ENCODE measurements at regions of chr7 and their contacts with region 1.

Region 1: GRCh38 chr7:1459522-1459892 is 237 bp upstream of the MICALL2 start:
- DNase-seq: peak; percentile 99
- H3K4me3 Mint-ChIP-seq: peak overlapping the region; percentile 72
- H3K27ac Mint-ChIP-seq: no peak overlapping the region
- H3K4me1 Mint-ChIP-seq: peaks cover 9% of the 10 kb centered on the region
- H3K27me3 Mint-ChIP-seq: no peaks in the 10 kb centered on the region

Region 2: GRCh38 chr7:1247527-1248059 is 211.9 kb before region 1 on chr7:
- CTCF ChIA-PET with region 1: no interaction called
- POLR2A ChIA-PET with region 1: no interaction called
- intact Hi-C with region 1: no loop called
- DNase-seq: no peak
- H3K4me3 Mint-ChIP-seq: no peak overlapping the region
- H3K27ac Mint-ChIP-seq: no peak overlapping the region
- H3K4me1 Mint-ChIP-seq: peaks cover 8% of the 10 kb centered on the region
- H3K27me3 Mint-ChIP-seq: peaks cover 65% of the 10 kb centered on the region

Region 3: DNA sequence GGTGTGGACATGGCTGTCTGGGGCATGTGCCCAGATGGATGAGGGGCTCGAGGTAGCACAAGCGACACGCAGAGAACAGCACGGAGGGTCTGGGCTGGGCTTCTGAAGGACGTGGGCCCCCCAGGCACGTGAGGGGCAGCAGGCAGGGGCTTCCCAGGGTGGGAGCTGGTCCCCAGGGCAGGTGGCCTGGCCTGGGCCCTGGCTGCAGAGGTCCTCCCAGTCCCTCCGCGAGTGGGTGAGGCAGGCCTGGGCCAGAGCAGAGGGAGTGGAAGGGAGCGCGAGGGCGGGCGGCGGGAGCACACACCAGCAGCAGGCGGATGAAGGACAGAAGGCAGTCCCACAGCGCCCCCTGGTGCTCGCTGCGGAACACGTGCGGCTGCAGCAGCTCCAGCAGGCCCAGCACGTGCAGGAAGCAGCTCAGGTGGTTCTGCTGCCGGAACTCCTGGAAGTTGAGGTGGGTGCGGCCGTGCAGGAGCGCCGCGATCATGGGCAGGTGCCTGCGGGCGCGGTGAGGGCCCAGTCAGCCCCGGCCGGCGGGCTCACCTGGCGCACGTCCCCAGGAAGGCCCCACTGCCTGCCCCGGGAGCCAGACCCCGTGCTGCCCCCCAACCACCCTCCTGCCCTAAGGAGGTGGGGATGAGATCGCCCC is 14.5 kb after region 1 on chr7:
- CTCF ChIA-PET with region 1: interaction called, 12 read pairs
- POLR2A ChIA-PET with region 1: no interaction called
- intact Hi-C with region 1: no loop called
- DNase-seq: peak; percentile 91
- H3K4me3 Mint-ChIP-seq: no peak overlapping the region
- H3K27ac Mint-ChIP-seq: no peak overlapping the region
- H3K4me1 Mint-ChIP-seq: peaks cover 3% of the 10 kb centered on the region
- H3K27me3 Mint-ChIP-seq: no peaks in the 10 kb centered on the region

Region 4: DNA sequence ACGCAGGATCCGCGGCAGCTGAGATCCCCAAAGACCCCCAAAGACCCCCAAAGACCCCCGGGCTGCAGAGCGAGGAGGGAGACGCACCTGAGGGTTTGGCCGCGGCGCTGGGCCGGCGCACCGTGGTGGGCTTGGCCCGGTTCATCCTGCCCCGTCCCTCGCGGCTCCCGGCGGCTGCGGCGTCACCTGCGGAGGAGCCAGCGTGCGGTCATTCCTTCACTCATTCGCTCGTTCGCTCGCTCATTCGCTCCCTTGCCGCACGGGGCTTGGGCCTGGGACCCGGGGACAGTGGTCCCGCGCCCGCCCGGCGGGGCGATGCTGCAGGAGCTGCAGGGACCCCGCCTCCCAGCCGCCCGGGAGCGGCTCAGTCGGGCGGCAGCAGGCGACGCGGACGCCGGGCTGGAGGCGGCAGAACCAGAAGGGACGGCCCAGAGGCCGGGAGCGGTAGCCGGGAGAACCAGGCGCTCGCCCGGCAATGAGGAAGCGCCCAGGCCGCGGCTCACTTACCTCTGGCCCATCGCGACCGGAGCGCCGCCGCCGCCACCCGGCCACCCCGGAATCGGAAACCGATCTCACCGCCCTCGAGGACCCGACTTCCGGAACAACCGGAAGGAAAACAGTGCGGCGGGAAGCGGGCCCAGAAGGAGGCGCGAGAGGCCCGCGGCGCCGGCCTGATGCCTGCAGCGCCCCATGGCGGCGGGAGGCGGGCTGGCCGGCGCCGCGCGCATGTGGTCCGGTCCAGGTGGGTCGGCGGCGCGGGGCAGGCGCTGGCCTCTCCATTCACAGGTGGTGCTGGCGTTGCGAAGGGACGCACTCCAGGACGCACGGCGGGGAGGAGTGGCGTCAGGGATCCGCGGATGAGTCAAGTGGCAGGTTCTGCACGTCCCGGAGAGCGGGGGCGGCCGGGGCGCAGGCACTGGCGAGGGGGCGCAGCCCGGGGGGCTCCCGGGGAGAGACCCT is 44.6 kb after region 1 on chr7 and contains the start of gene INTS1:
- CTCF ChIA-PET with region 1: no interaction called
- POLR2A ChIA-PET with region 1: no interaction called
- intact Hi-C with region 1: loop called (anchors 5 kb)
- DNase-seq: peak; percentile 93
- H3K4me3 Mint-ChIP-seq: peak within 1 kb of the TSS; percentile 91
- H3K27ac Mint-ChIP-seq: peak within 1 kb of the TSS; percentile 80
- H3K4me1 Mint-ChIP-seq: peaks cover 30% of the 10 kb centered on the region
- H3K27me3 Mint-ChIP-seq: no peaks in the 10 kb centered on the region
- total RNA-seq, gene INTS1: 86.4 to 92.5 TPM

Region 5: DNA sequence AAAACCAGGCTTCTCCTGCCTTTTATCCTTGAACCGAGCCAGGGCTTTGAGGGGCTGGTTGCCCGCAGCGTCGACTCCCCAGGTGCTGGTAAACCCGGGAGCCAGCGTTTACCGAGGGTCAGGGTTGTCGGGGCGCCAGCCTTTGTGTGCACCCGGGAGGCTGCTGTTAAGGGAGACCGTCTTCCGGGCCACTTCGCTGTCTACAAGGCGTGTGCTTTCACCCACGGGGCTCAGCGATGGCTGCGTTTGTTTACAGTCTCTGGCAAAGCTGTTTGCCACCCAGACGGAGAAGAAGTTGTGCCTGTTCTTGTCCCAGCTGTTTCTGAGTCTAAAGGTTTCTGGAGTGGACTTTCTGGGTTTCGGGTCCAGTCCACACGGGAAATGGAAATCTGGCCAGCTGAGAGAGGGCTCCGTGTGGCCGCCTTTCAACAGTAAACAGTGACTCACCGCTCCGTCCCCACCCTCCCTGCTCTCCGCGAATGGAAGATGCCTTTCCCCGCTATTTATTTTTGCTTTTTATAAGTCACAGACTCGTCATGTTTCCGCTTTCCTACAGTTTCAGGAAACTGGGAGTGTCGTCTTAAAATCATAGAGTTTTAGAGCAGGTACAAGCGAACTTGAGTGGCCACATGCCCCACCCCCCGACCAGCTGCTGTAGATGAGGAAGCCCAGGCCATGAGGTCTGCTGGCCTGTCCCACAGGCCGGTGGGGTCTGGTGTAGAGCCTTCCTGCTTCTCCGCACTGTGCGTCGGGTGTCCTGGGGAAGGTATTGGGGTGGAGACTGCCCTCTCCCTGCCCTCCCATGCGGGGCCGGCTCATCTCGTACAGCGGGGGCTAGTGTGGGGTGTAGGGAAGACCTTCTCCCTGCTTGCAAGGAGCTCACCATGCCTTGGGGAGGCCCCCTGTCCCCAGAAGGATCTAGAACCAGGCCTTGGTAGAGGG is 73.2 kb after region 1 on chr7:
- CTCF ChIA-PET with region 1: no interaction called
- POLR2A ChIA-PET with region 1: no interaction called
- intact Hi-C with region 1: loop called (anchors 5 kb)
- DNase-seq: peak; percentile 77
- H3K4me3 Mint-ChIP-seq: peak overlapping the region; percentile 81
- H3K27ac Mint-ChIP-seq: peak overlapping the region; percentile 82
- H3K4me1 Mint-ChIP-seq: peaks cover 26% of the 10 kb centered on the region
- H3K27me3 Mint-ChIP-seq: no peaks in the 10 kb centered on the region

Measured in activated CD4-positive, alpha-beta memory T cell treated with anti-CD3 and anti-CD28 coated beads for 36 hours (primary cell).